Activated CD4-positive, alpha-beta memory T cell treated with anti-CD3 and anti-CD28 coated beads for 36 hours (primary cell): ENCODE measurements at regions of chr22 and their contacts with region 1.

Region 1: DNA sequence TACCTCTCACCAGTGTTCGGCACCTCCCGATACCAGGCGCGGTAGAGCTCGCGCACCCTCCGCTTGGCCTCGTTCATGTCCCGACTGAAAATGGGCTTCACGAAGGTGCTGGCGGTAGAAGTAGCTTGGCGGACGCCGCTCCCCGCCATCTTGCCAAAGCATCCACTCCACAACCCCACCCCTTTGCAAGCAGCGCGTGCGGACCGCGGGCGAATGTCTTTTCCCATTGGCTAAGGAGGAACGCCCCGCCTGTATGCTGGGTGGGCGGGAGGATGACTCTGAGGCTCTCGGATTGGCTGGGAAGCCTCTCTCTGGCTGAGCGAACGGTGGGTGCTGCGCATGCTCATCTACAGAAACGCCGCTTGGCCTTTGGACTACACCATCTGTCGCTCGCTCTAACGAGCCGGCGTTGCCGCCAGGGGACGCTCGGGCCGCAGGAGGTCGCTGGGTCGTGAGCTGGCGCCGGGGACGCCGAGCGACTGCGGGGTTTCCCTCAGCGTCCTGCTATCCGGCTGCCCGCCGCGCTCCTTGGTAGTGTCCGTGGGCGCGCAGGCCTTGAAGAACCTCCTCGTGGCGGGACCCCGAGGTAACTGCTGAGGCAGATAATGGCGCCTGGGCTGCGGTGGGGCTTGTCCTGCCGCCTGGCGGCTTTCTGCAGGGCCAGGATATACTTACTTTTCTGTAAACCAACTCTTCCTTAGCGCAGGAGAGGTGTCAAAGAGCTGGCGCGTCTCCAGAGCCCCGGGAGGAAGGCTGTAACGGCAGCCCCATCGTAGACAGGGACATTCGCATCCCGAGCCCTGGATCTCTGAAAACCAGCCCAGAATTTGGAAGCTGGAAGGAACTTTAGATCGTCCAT is at the start of gene NDUFA6:
- DNase-seq: peak; percentile 99
- H3K4me3 Mint-ChIP-seq: peak within 1 kb of the TSS; percentile 97
- H3K27ac Mint-ChIP-seq: peak within 1 kb of the TSS; percentile 99
- H3K4me1 Mint-ChIP-seq: peaks cover 26% of the 10 kb centered on the region
- H3K27me3 Mint-ChIP-seq: no peaks in the 10 kb centered on the region
- total RNA-seq, gene NDUFA6: 124 to 129 TPM

Region 2: GRCh38 chr22:42070517-42071422 is 20.1 kb before region 1 on chr22 and contains the start of gene NAGA:
- CTCF ChIA-PET with region 1: interaction called, 18 read pairs
- POLR2A ChIA-PET with region 1: interaction called, 18 read pairs
- intact Hi-C with region 1: loop called (anchors 1 kb)
- DNase-seq: peak; percentile 97
- H3K4me3 Mint-ChIP-seq: peak within 1 kb of the TSS; percentile 88
- H3K27ac Mint-ChIP-seq: peak within 1 kb of the TSS; percentile 89
- H3K4me1 Mint-ChIP-seq: peaks cover 32% of the 10 kb centered on the region
- H3K27me3 Mint-ChIP-seq: no peaks in the 10 kb centered on the region
- total RNA-seq, gene NAGA: 28.9 to 30.5 TPM

Region 3: DNA sequence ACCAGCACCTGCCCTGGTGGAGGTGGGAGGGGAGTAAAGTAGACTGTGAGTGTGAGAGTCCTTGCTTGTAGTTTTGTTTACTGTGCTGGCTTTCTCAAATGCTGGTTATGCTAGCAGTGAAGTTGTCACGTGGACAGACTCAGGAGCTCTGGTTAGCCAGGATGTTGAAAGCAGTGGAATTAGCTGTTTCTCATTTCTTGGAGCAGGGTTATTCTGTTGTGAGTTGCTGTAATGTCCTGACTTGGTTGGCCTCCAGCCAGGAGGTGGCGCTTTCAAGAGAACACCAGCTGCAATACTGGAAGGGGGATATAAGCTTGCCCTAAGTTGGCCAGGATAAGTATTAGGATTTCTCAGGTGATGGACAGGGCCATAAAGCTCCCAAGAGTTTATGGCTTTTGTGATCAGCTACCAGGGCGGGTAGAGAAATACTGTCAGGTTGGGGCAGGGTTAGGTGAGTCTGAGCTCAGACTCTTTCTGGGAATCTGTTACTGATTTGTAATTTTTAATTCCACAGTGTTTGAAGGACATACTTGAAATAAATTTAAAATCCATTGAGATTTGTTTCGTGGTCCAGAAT is 26.1 kb after region 1 on chr22:
- CTCF ChIA-PET with region 1: interaction called, 15 read pairs
- POLR2A ChIA-PET with region 1: interaction called, 6 read pairs
- intact Hi-C with region 1: loop called (anchors 2 kb)
- DNase-seq: no peak
- H3K4me3 Mint-ChIP-seq: no peak overlapping the region
- H3K27ac Mint-ChIP-seq: no peak overlapping the region
- H3K4me1 Mint-ChIP-seq: peaks cover 26% of the 10 kb centered on the region
- H3K27me3 Mint-ChIP-seq: no peaks in the 10 kb centered on the region

Region 4: GRCh38 chr22:42369245-42370041 is 278.6 kb after region 1 on chr22:
- CTCF ChIA-PET with region 1: no interaction called
- POLR2A ChIA-PET with region 1: interaction called, 7 read pairs
- intact Hi-C with region 1: loop called (anchors 2 kb)
- DNase-seq: peak; percentile 92
- H3K4me3 Mint-ChIP-seq: peak overlapping the region; percentile 82
- H3K27ac Mint-ChIP-seq: peak overlapping the region; percentile 39
- H3K4me1 Mint-ChIP-seq: peaks cover 13% of the 10 kb centered on the region
- H3K27me3 Mint-ChIP-seq: peaks cover 22% of the 10 kb centered on the region

Region 5: GRCh38 chr22:42473484-42474193 is 382.8 kb after region 1 on chr22:
- CTCF ChIA-PET with region 1: interaction called, 24 read pairs
- POLR2A ChIA-PET with region 1: no interaction called
- intact Hi-C with region 1: no loop called
- DNase-seq: no peak
- H3K4me3 Mint-ChIP-seq: no peak overlapping the region
- H3K27ac Mint-ChIP-seq: no peak overlapping the region
- H3K4me1 Mint-ChIP-seq: peaks cover 5% of the 10 kb centered on the region
- H3K27me3 Mint-ChIP-seq: no peaks in the 10 kb centered on the region